ENCODE measurements at regions of chr9 and their contacts with region 1.

Region 1: GRCh38 chr9:33170464-33171415 is 3.6 kb upstream of the B4GALT1 start:
- DNase-seq: peak; percentile 49
- ATAC-seq: peak; percentile 15; the same call in 1 of the 2 replicates
- H3K4me3 ChIP-seq: no peak overlapping the region
- H3K27ac ChIP-seq: no peak overlapping the region
- H3K4me1 ChIP-seq: peaks cover 19 to 38% of the 10 kb centered on the region in 2 experiments; a peak in 3 of 4 replicates
- H3K27me3 ChIP-seq: no peaks in the 10 kb centered on the region
- CTCF ChIP-seq: peak in 2 of 3 experiments; percentile 30 to 52; a peak in 3 of 6 replicates
- POLR2A ChIP-seq: no peak
- RAD21 ChIP-seq: no peak

Region 2: GRCh38 chr9:33076358-33077004 is 94.3 kb before region 1 on chr9 and contains the start of gene SMU1:
- CTCF ChIA-PET with region 1: interaction called, 3 read pairs
- POLR2A ChIA-PET with region 1: no interaction called
- RAD21 ChIA-PET with region 1: no interaction called
- intact Hi-C with region 1: loop called (anchors 1 kb)
- DNase-seq: peak; percentile 96
- ATAC-seq: peak; percentile 98
- H3K4me3 ChIP-seq: peak within 1 kb of the TSS; percentile 96 to 99
- H3K27ac ChIP-seq: peak within 1 kb of the TSS; percentile 46
- H3K4me1 ChIP-seq: peaks cover 5 to 14% of the 10 kb centered on the region in 2 experiments; a peak in 3 of 4 replicates
- H3K27me3 ChIP-seq: no peaks in the 10 kb centered on the region
- CTCF ChIP-seq: no peak
- POLR2A ChIP-seq: peak; percentile 61
- RAD21 ChIP-seq: no peak
- total RNA-seq, gene SMU1: 30.5 TPM

Region 3: GRCh38 chr9:33116860-33117259 is 53.9 kb before region 1 on chr9:
- CTCF ChIA-PET with region 1: no interaction called
- POLR2A ChIA-PET with region 1: no interaction called
- RAD21 ChIA-PET with region 1: no interaction called
- intact Hi-C with region 1: no loop called
- DNase-seq: no peak
- ATAC-seq: no peak; the same call in 1 of the 2 replicates
- H3K4me3 ChIP-seq: no peak overlapping the region
- H3K27ac ChIP-seq: no peak overlapping the region
- H3K4me1 ChIP-seq: peaks cover 11 to 16% of the 10 kb centered on the region in 2 experiments
- H3K27me3 ChIP-seq: no peaks in the 10 kb centered on the region
- CTCF ChIP-seq: no peak
- POLR2A ChIP-seq: no peak
- RAD21 ChIP-seq: no peak

Region 4: DNA sequence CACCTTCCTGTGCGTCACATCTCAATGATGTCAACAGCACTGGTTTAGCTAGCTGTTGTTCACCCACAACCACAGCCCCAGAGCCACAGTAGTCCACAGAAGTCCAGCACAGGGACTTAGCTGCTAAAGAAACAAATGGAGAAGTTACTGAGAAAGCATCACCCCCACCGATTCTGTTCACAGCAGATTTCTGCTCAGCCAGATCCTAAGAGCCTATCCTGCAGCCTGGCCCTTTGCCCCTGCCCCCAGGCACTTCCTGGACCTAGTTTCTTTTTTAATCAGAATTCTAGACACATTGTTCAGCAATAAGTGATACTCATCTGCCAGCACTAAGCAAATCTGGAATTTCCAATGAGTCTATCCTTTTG is 11.0 kb before region 1 on chr9:
- CTCF ChIA-PET with region 1: interaction called, 13 read pairs
- POLR2A ChIA-PET with region 1: no interaction called
- RAD21 ChIA-PET with region 1: no interaction called
- intact Hi-C with region 1: no loop called
- DNase-seq: no peak
- ATAC-seq: no peak
- H3K4me3 ChIP-seq: peak overlapping the region in 1 of 2 experiments; percentile 4; a peak in 3 of 4 replicates
- H3K27ac ChIP-seq: no peak overlapping the region
- H3K4me1 ChIP-seq: peaks cover 64 to 86% of the 10 kb centered on the region in 2 experiments
- H3K27me3 ChIP-seq: no peaks in the 10 kb centered on the region
- CTCF ChIP-seq: no peak
- POLR2A ChIP-seq: no peak
- RAD21 ChIP-seq: no peak